CD4-positive, alpha-beta memory T cell (primary cell): ENCODE measurements at regions of chr11 and their contacts with region 1.

Region 1: DNA sequence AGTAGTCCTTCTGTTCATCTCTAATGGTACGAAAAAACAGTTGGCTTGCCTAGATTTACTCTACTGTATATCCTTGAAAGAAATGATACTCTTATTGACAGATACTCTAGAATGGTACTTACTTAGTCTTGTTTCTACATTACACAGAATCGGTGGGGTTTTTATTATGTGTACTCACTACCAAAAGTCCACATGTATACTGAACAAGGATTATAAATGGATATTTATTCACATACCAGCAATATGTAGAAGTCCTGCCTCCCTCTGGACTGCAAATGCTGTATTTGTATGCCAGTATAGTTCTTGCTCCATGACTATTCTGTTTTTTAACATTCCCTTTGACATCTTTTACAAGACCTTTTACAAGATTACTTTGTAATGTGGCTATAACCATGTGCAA is 13.9 kb downstream of the PCF11 start:
- DNase-seq: no peak
- H3K4me3 ChIP-seq: peak overlapping the region in 1 of 2 donors; percentile 7
- H3K4me3 Mint-ChIP-seq: peak overlapping the region; percentile 71 to 85 (median 82)
- H3K27ac ChIP-seq: peak overlapping the region; percentile 22
- H3K27ac Mint-ChIP-seq: peak overlapping the region in 3 of 7 donors; percentile 13 to 68 (median 50)
- H3K4me1 ChIP-seq: peaks cover 96% of the 10 kb centered on the region
- H3K4me1 Mint-ChIP-seq: peaks cover 52 to 94% (median 79%) of the 10 kb centered on the region in 4 donors
- H3K27me3 ChIP-seq: no peaks in the 10 kb centered on the region
- H3K27me3 Mint-ChIP-seq: no peaks in the 10 kb centered on the region

Region 2: GRCh38 chr11:83087035-83087434 is 83.8 kb before region 1 on chr11:
- CTCF ChIA-PET with region 1: no interaction called
- POLR2A ChIA-PET with region 1: no interaction called
- intact Hi-C with region 1: no loop called
- DNase-seq: no peak
- H3K4me3 ChIP-seq: no peak overlapping the region
- H3K4me3 Mint-ChIP-seq: no peak overlapping the region
- H3K27ac ChIP-seq: no peak overlapping the region
- H3K27ac Mint-ChIP-seq: peak overlapping the region in 2 of 7 donors; percentile 32 to 58
- H3K4me1 ChIP-seq: no peaks in the 10 kb centered on the region
- H3K4me1 Mint-ChIP-seq: peaks cover 0 to 13% (median 11%) of the 10 kb centered on the region in 4 donors
- H3K27me3 ChIP-seq: no peaks in the 10 kb centered on the region
- H3K27me3 Mint-ChIP-seq: no peaks in the 10 kb centered on the region

Region 3: GRCh38 chr11:83187465-83187864 is 16.6 kb after region 1 on chr11:
- CTCF ChIA-PET with region 1: no interaction called
- POLR2A ChIA-PET with region 1: interaction called, 6 read pairs
- intact Hi-C with region 1: loop called (anchors 2 kb)
- DNase-seq: no peak
- H3K4me3 ChIP-seq: no peak overlapping the region
- H3K4me3 Mint-ChIP-seq: no peak overlapping the region
- H3K27ac ChIP-seq: no peak overlapping the region
- H3K27ac Mint-ChIP-seq: peak overlapping the region in 4 of 7 donors; percentile 45 to 80 (median 64)
- H3K4me1 ChIP-seq: peaks cover 11% of the 10 kb centered on the region
- H3K4me1 Mint-ChIP-seq: peaks cover 7 to 14% (median 14%) of the 10 kb centered on the region in 4 donors
- H3K27me3 ChIP-seq: no peaks in the 10 kb centered on the region
- H3K27me3 Mint-ChIP-seq: no peaks in the 10 kb centered on the region